Psoas muscle (tissue), 8 donors: ENCODE measurements at regions of chr5 and their contacts with region 1.

Region 1: DNA sequence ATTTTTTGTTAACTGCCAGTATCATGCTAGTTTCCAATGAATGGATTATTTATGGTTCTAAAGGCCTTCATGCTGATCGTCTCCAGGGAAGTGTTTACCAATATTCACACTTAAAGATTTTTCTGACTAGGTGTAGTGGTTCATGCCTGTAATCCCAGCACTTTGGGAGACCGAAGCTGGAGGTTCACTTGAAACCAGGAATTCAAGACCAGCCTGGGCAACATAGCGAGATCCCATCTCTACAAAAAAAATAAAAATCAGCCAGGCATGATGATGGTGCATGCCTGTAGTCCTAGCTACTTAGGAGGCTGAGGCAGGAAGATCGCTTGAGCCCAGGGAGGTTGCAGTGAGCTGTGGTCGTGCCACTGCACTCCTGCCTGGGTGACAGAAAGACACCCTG is 43.5 kb downstream of the FAM13B start:
- DNase-seq: no peak
- ATAC-seq: no peak
- H3K4me3 ChIP-seq: no peak overlapping the region
- H3K27ac ChIP-seq: no peak overlapping the region
- H3K4me1 ChIP-seq: peaks cover 6% of the 10 kb centered on the region
- H3K27me3 ChIP-seq: no peaks in the 10 kb centered on the region
- CTCF ChIP-seq: no peak

Region 2: DNA sequence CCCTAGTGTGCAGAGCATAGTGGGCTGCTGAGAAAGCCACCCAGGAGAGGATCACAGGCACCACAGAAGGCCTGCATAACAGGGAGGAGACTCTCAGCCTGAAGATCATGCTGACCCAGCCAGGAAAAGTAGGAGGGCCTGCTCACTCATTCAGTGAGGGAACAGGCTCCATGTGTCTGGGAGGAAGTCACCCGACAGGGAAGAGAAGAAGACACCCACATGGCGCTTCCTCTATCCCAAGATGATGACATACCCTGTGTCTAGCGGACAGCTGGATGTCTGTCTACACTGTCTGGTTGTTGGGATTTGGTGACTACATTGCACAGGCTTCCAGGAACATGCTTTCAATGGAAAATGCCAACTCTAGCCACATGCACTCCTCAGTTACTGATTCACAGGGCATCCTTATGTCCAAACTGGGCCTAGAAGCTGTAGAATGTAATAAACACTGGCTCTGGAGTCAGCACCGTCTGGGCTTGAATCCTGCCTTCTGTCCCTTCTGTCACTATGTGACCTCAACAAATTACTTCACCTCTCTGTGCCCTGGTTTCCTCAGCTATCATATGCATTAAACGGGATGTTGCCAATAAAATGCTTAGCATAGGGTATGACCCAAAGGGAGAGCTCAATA is 301.1 kb before region 1 on chr5:
- intact Hi-C with region 1: no loop called
- DNase-seq: no peak
- ATAC-seq: peak in 1 of 4 donors; percentile 86
- H3K4me3 ChIP-seq: no peak overlapping the region
- H3K27ac ChIP-seq: no peak overlapping the region
- H3K4me1 ChIP-seq: peaks cover 3% of the 10 kb centered on the region
- H3K27me3 ChIP-seq: no peaks in the 10 kb centered on the region
- CTCF ChIP-seq: no peak

Region 3: DNA sequence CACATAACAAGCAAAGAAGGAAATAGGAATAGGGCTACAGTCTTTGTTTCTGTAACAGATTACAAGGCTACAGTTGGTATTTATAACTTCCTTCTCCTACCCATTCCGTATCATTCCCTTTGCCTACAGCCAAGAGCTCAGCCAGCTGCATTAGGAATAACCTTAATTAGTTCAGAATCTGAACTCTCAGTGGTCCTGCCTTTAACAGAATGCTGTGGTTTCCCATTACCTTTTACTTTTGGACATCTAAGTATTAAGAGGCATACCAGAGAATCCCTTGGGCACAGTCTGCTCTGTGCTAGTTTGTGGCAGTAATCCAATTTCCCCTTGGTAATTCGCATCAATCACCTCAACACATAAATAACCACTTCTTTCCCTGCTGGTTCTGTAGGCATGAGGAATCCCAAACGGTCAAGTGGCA is 55.9 kb before region 1 on chr5:
- intact Hi-C with region 1: loop called in 1 of 2 experiments (anchors 10 kb)
- DNase-seq: no peak
- ATAC-seq: peak in 1 of 4 donors; percentile 40
- H3K4me3 ChIP-seq: no peak overlapping the region
- H3K27ac ChIP-seq: no peak overlapping the region
- H3K4me1 ChIP-seq: peaks cover 9% of the 10 kb centered on the region
- H3K27me3 ChIP-seq: no peaks in the 10 kb centered on the region
- CTCF ChIP-seq: no peak